Naive thymus-derived CD4-positive, alpha-beta T cell (primary cell): ENCODE measurements at regions of chr4 and their contacts with region 1.

Region 1: GRCh38 chr4:80365928-80366327 is 30.4 kb downstream of the CFAP299 start:
- DNase-seq: peak in 8 of 9 donors; percentile 18 to 72 (median 62)
- ATAC-seq: peak; percentile 79
- H3K4me3 ChIP-seq: no peak overlapping the region
- H3K4me3 Mint-ChIP-seq: no peak overlapping the region
- H3K27ac ChIP-seq: no peak overlapping the region
- H3K27ac Mint-ChIP-seq: peak overlapping the region in 2 of 9 donors; percentile 32 to 52
- H3K4me1 ChIP-seq: peaks cover 0 to 4% of the 10 kb centered on the region in 2 donors
- H3K4me1 Mint-ChIP-seq: peaks cover 0 to 21% (median 8%) of the 10 kb centered on the region in 7 donors
- H3K27me3 ChIP-seq: no peaks in the 10 kb centered on the region
- H3K27me3 Mint-ChIP-seq: peaks cover 0 to 5% (median 0%) of the 10 kb centered on the region in 5 donors

Region 2: GRCh38 chr4:79083406-79084010 is 1282.4 kb before region 1 on chr4:
- CTCF ChIA-PET with region 1: no interaction called
- POLR2A ChIA-PET with region 1: no interaction called
- intact Hi-C with region 1: no loop called
- DNase-seq: no peak
- ATAC-seq: no peak
- H3K4me3 ChIP-seq: no peak overlapping the region
- H3K4me3 Mint-ChIP-seq: no peak overlapping the region
- H3K27ac ChIP-seq: no peak overlapping the region
- H3K27ac Mint-ChIP-seq: no peak overlapping the region
- H3K4me1 ChIP-seq: no peaks in the 10 kb centered on the region
- H3K4me1 Mint-ChIP-seq: no peaks in the 10 kb centered on the region
- H3K27me3 ChIP-seq: no peaks in the 10 kb centered on the region
- H3K27me3 Mint-ChIP-seq: peaks cover 0 to 10% (median 4%) of the 10 kb centered on the region in 5 donors

Region 3: DNA sequence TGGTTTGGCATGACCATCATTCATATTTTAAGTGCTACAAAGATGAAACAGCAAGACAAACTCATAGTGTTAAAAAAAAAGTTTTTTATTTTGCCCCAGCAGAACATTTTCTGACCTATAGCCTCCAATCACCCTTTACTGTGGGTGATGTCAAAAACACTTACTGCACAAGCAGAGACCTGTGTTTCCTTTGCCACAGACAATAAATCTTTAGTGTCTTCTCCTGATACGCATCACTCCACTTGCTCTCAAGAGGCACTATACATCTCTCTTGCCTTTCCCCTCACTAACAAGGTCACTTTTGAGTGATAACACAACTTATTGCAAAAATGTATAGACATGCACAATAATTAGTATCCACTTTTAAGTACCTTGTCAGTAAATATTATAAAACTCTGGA is 418.5 kb before region 1 on chr4:
- CTCF ChIA-PET with region 1: no interaction called
- POLR2A ChIA-PET with region 1: no interaction called
- intact Hi-C with region 1: no loop called
- DNase-seq: no peak
- ATAC-seq: no peak
- H3K4me3 ChIP-seq: no peak overlapping the region
- H3K4me3 Mint-ChIP-seq: no peak overlapping the region
- H3K27ac ChIP-seq: no peak overlapping the region
- H3K27ac Mint-ChIP-seq: no peak overlapping the region
- H3K4me1 ChIP-seq: no peaks in the 10 kb centered on the region
- H3K4me1 Mint-ChIP-seq: peaks cover 0 to 17% (median 12%) of the 10 kb centered on the region in 7 donors
- H3K27me3 ChIP-seq: no peaks in the 10 kb centered on the region
- H3K27me3 Mint-ChIP-seq: no peaks in the 10 kb centered on the region

Region 4: GRCh38 chr4:80462621-80463091 is 96.7 kb after region 1 on chr4:
- CTCF ChIA-PET with region 1: interaction called, 6 read pairs
- POLR2A ChIA-PET with region 1: no interaction called
- intact Hi-C with region 1: loop called in 1 of 2 experiments (anchors 1 kb)
- DNase-seq: peak in 5 of 9 donors; percentile 11 to 39 (median 21)
- ATAC-seq: no peak
- H3K4me3 ChIP-seq: peak overlapping the region; percentile 50
- H3K4me3 Mint-ChIP-seq: peak overlapping the region; percentile 22 to 88 (median 82)
- H3K27ac ChIP-seq: peak overlapping the region; percentile 29
- H3K27ac Mint-ChIP-seq: peak overlapping the region; percentile 65 to 93 (median 84)
- H3K4me1 ChIP-seq: peaks cover 0 to 12% of the 10 kb centered on the region in 2 donors
- H3K4me1 Mint-ChIP-seq: peaks cover 6 to 58% (median 40%) of the 10 kb centered on the region in 7 donors
- H3K27me3 ChIP-seq: no peaks in the 10 kb centered on the region
- H3K27me3 Mint-ChIP-seq: no peaks in the 10 kb centered on the region

Region 5: GRCh38 chr4:80576796-80577195 is 210.9 kb after region 1 on chr4:
- CTCF ChIA-PET with region 1: no interaction called
- POLR2A ChIA-PET with region 1: no interaction called
- intact Hi-C with region 1: no loop called
- DNase-seq: no peak
- ATAC-seq: no peak
- H3K4me3 ChIP-seq: no peak overlapping the region
- H3K4me3 Mint-ChIP-seq: no peak overlapping the region
- H3K27ac ChIP-seq: no peak overlapping the region
- H3K27ac Mint-ChIP-seq: no peak overlapping the region
- H3K4me1 ChIP-seq: peaks cover 0 to 6% of the 10 kb centered on the region in 2 donors
- H3K4me1 Mint-ChIP-seq: peaks cover 0 to 18% (median 16%) of the 10 kb centered on the region in 7 donors
- H3K27me3 ChIP-seq: no peaks in the 10 kb centered on the region
- H3K27me3 Mint-ChIP-seq: no peaks in the 10 kb centered on the region

Region 6: GRCh38 chr4:80610845-80611677 is 245.1 kb after region 1 on chr4:
- CTCF ChIA-PET with region 1: no interaction called
- POLR2A ChIA-PET with region 1: no interaction called
- intact Hi-C with region 1: loop called (anchors 5 to 10 kb)
- DNase-seq: no peak
- ATAC-seq: no peak
- H3K4me3 ChIP-seq: no peak overlapping the region
- H3K4me3 Mint-ChIP-seq: no peak overlapping the region
- H3K27ac ChIP-seq: no peak overlapping the region
- H3K27ac Mint-ChIP-seq: no peak overlapping the region
- H3K4me1 ChIP-seq: no peaks in the 10 kb centered on the region
- H3K4me1 Mint-ChIP-seq: peaks cover 0 to 27% (median 14%) of the 10 kb centered on the region in 7 donors
- H3K27me3 ChIP-seq: no peaks in the 10 kb centered on the region
- H3K27me3 Mint-ChIP-seq: peaks cover 0 to 5% (median 0%) of the 10 kb centered on the region in 5 donors

Region 7: DNA sequence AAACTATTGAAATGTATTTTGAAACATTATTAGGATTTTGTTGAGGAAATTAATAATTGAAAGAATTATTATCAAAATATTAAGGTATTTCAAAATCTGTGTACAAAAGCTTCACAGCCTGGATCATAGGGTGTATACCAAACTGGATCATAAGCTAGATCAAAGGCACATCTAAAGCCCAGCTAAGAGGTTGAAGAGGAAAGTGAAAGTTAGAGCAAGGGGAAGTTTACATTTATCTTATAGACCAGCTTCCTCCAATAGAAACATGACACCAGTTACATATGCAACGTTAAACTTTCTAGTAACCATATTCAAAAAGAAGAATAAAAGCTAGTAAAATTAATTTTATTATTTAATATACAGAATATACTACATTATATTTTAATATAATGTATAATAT is 437.4 kb after region 1 on chr4:
- CTCF ChIA-PET with region 1: no interaction called
- POLR2A ChIA-PET with region 1: no interaction called
- intact Hi-C with region 1: loop called (anchors 5 kb)
- DNase-seq: no peak
- ATAC-seq: no peak
- H3K4me3 ChIP-seq: no peak overlapping the region
- H3K4me3 Mint-ChIP-seq: no peak overlapping the region
- H3K27ac ChIP-seq: no peak overlapping the region
- H3K27ac Mint-ChIP-seq: no peak overlapping the region
- H3K4me1 ChIP-seq: no peaks in the 10 kb centered on the region
- H3K4me1 Mint-ChIP-seq: peaks cover 0 to 20% (median 3%) of the 10 kb centered on the region in 7 donors
- H3K27me3 ChIP-seq: no peaks in the 10 kb centered on the region
- H3K27me3 Mint-ChIP-seq: no peaks in the 10 kb centered on the region

Region 8: GRCh38 chr4:81040012-81040659 is 674.2 kb after region 1 on chr4:
- CTCF ChIA-PET with region 1: interaction called, 70 read pairs
- POLR2A ChIA-PET with region 1: no interaction called
- intact Hi-C with region 1: loop called (anchors 1 kb)
- DNase-seq: peak in 6 of 9 donors; percentile 26 to 54 (median 52)
- ATAC-seq: peak; percentile 47
- H3K4me3 ChIP-seq: no peak overlapping the region
- H3K4me3 Mint-ChIP-seq: no peak overlapping the region
- H3K27ac ChIP-seq: no peak overlapping the region
- H3K27ac Mint-ChIP-seq: no peak overlapping the region
- H3K4me1 ChIP-seq: no peaks in the 10 kb centered on the region
- H3K4me1 Mint-ChIP-seq: no peaks in the 10 kb centered on the region
- H3K27me3 ChIP-seq: no peaks in the 10 kb centered on the region
- H3K27me3 Mint-ChIP-seq: peaks cover 10 to 28% (median 20%) of the 10 kb centered on the region in 5 donors

Region 9: DNA sequence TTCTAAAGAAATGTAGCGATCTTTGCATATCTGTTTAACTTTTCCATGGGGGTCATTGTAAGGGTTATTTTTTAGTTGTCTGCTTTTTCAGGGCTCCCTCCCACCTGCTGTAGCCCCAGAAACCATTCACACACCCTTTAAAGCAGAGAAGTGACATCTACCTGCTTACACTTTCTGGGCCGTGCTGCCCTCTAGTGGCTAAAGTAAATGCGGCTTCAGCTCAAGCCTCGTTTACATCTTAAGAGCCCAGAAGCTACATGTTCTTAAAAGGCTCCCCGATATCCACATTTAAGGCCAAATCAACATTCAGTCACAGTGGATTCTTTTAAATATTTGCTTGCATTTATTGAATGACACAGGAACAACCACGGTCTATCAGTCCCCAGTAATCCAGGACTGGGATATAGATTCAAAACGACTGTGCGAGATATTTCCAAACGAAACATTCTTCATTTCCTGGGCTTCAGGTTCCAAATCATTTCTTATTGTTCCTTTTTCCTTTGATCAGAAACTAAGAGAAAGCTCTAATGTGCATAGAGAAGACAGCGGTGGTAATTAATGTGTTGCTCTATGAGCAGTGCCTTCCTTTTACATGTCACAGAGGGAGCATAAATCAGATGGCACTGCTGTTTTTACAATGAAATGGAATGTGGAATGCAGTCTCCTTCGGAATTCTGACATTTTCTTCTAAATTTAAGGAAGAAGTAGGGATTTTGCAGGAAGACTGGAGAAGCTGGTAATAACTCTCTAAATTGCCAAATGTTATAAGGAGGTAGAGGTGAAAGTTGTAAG is 985.9 kb after region 1 on chr4:
- CTCF ChIA-PET with region 1: interaction called, 6 read pairs
- POLR2A ChIA-PET with region 1: no interaction called
- intact Hi-C with region 1: loop called (anchors 1 to 5 kb)
- DNase-seq: peak; percentile 21 to 59 (median 49)
- ATAC-seq: peak; percentile 73
- H3K4me3 ChIP-seq: no peak overlapping the region
- H3K4me3 Mint-ChIP-seq: no peak overlapping the region
- H3K27ac ChIP-seq: no peak overlapping the region
- H3K27ac Mint-ChIP-seq: no peak overlapping the region
- H3K4me1 ChIP-seq: no peaks in the 10 kb centered on the region
- H3K4me1 Mint-ChIP-seq: peaks cover 0 to 2% (median 0%) of the 10 kb centered on the region in 7 donors
- H3K27me3 ChIP-seq: no peaks in the 10 kb centered on the region
- H3K27me3 Mint-ChIP-seq: peaks cover 0 to 24% (median 11%) of the 10 kb centered on the region in 5 donors